Panc1 (cell line): ENCODE measurements at regions of chr2 and their contacts with region 1.

Region 1: GRCh38 chr2:176814306-176815052 is 398.1 kb upstream of the HNRNPA3 start:
- DNase-seq: peak; percentile 4
- ATAC-seq: no peak
- H3K4me3 ChIP-seq: no peak overlapping the region
- H3K27ac ChIP-seq: no peak overlapping the region
- H3K4me1 ChIP-seq: no peaks in the 10 kb centered on the region
- H3K27me3 ChIP-seq: no peaks in the 10 kb centered on the region
- CTCF ChIP-seq: peak; percentile 67; the same call in 1 of the 2 replicates

Region 2: DNA sequence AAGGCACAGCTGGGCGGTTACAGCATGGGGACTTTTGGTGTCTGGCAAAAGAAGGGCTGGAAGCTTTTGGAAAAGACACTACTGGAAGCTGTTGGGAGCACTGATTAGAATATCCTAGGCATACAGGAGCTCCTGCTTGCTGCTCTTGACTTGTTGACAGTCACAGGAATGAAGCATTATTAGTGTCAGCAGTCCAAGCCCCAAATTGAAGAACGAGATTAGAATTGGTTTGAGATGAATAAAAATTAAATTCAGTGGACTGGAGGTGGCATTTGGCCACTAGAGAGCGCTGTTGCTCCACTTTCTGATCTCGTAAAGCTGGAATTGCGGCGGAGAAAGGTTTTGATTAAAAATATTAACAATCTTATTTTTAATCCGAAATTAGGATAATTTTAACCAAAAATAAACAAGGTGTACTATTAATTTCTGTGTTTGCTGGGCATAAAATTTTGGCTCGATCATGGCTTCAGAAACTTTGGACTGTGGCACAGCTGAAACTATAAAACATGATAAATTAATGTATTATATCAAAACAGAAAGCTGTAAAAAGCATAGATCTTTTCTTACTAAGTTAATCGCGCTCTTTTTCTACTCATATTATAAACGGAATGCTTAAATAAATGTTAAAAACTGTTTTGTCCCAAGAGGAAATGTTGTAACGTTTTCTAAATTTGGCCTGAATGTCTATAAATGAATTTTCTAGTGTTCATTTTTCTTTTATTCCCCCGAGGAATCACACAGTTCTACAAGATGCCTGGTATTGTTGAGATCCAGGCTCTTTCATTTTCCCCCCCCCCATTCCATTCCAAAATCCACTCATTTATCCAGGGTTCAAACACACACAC is 687.3 kb before region 1 on chr2:
- CTCF ChIA-PET with region 1: no interaction called
- POLR2A ChIA-PET with region 1: no interaction called
- in situ Hi-C with region 1: no loop called
- intact Hi-C with region 1: loop called (anchors 10 kb)
- DNase-seq: no peak
- ATAC-seq: peak; percentile 72; the same call in 1 of the 2 replicates
- H3K4me3 ChIP-seq: peak overlapping the region in 1 of 2 experiments; percentile 25; a peak in 1 of 4 replicates
- H3K27ac ChIP-seq: no peak overlapping the region
- H3K4me1 ChIP-seq: peaks cover 7% of the 10 kb centered on the region
- H3K27me3 ChIP-seq: no peaks in the 10 kb centered on the region
- CTCF ChIP-seq: peak; percentile 87

Region 3: GRCh38 chr2:176595986-176596385 is 218.5 kb before region 1 on chr2:
- CTCF ChIA-PET with region 1: no interaction called
- POLR2A ChIA-PET with region 1: no interaction called
- in situ Hi-C with region 1: no loop called
- intact Hi-C with region 1: no loop called
- DNase-seq: no peak
- ATAC-seq: no peak
- H3K4me3 ChIP-seq: no peak overlapping the region
- H3K27ac ChIP-seq: no peak overlapping the region
- H3K4me1 ChIP-seq: no peaks in the 10 kb centered on the region
- H3K27me3 ChIP-seq: no peaks in the 10 kb centered on the region
- CTCF ChIP-seq: no peak

Region 4: GRCh38 chr2:176653479-176654443 is 160.7 kb before region 1 on chr2:
- CTCF ChIA-PET with region 1: interaction called, 3 read pairs
- POLR2A ChIA-PET with region 1: no interaction called
- in situ Hi-C with region 1: no loop called
- intact Hi-C with region 1: loop called (anchors 5 kb)
- DNase-seq: no peak
- ATAC-seq: peak; percentile 92
- H3K4me3 ChIP-seq: no peak overlapping the region
- H3K27ac ChIP-seq: no peak overlapping the region
- H3K4me1 ChIP-seq: no peaks in the 10 kb centered on the region
- H3K27me3 ChIP-seq: no peaks in the 10 kb centered on the region
- CTCF ChIP-seq: peak; percentile 86

Region 5: GRCh38 chr2:176682278-176682677 is 132.2 kb before region 1 on chr2:
- CTCF ChIA-PET with region 1: no interaction called
- POLR2A ChIA-PET with region 1: no interaction called
- in situ Hi-C with region 1: no loop called
- intact Hi-C with region 1: loop called (anchors 10 kb)
- DNase-seq: no peak
- ATAC-seq: no peak
- H3K4me3 ChIP-seq: no peak overlapping the region
- H3K27ac ChIP-seq: no peak overlapping the region
- H3K4me1 ChIP-seq: no peaks in the 10 kb centered on the region
- H3K27me3 ChIP-seq: peaks cover 7% of the 10 kb centered on the region
- CTCF ChIP-seq: no peak